Brain microvascular endothelial cell (primary cell): ENCODE measurements at regions of chr4 and their contacts with region 1.

Region 1: GRCh38 chr4:158856852-158857251 is 88.0 kb downstream of the FNIP2 start:
- DNase-seq: no peak
- H3K4me3 ChIP-seq: no peak overlapping the region
- H3K27ac ChIP-seq: no peak overlapping the region
- H3K27me3 ChIP-seq: no peaks in the 10 kb centered on the region
- CTCF ChIP-seq: peak; percentile 44

Region 2: DNA sequence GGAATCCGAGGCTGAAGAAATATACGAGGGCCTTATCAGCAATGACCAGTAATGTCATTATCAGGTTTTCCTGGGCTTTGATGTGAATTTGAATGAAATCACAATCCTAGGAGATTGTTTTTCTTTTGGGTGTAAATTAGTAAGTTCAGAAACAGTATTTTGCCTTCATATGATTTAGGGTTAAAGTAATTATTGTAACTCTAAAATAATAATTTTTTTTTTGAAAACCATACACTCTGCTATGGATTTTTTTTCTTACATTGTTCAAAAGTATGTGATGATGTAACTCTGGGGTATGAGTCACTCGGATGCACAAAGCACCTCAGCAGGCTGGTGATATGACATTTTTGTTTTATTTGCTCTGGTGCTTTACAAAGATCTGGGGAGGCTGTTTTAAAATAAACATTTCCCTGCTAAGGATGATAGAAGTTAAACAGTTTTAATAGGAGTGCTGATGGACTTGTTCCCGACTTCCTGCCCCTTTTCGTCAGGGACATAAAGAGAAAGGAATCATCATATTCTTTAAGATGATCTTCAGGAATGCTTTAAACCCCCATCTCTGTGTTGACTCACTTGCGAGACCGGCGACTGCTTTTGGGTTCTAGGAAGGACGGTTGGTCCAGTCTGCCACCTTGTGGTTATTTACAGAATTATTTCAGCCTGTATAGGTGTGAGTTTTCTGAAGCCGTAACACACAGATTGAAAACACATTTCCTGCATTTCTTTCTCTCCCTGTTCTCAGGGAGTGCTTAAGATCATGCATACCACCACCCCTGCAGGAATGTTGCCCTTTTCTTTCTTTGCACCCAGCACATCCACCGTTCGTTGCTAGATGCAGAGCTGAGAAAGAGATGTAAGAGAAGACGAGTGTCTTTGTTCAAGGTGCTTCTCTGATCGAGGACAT is 318.5 kb after region 1 on chr4:
- in situ Hi-C with region 1: loop called (anchors 25 kb)
- DNase-seq: peak; percentile 87
- H3K4me3 ChIP-seq: peak overlapping the region; percentile 39
- H3K27ac ChIP-seq: peak overlapping the region; percentile 74
- H3K27me3 ChIP-seq: no peaks in the 10 kb centered on the region
- CTCF ChIP-seq: peak; percentile 72

Region 3: GRCh38 chr4:159220353-159220752 is 363.5 kb after region 1 on chr4:
- in situ Hi-C with region 1: no loop called
- DNase-seq: no peak
- H3K4me3 ChIP-seq: no peak overlapping the region
- H3K27ac ChIP-seq: no peak overlapping the region
- H3K27me3 ChIP-seq: no peaks in the 10 kb centered on the region
- CTCF ChIP-seq: no peak